ENCODE measurements at regions of chr5 and their contacts with region 1.

Region 1: DNA sequence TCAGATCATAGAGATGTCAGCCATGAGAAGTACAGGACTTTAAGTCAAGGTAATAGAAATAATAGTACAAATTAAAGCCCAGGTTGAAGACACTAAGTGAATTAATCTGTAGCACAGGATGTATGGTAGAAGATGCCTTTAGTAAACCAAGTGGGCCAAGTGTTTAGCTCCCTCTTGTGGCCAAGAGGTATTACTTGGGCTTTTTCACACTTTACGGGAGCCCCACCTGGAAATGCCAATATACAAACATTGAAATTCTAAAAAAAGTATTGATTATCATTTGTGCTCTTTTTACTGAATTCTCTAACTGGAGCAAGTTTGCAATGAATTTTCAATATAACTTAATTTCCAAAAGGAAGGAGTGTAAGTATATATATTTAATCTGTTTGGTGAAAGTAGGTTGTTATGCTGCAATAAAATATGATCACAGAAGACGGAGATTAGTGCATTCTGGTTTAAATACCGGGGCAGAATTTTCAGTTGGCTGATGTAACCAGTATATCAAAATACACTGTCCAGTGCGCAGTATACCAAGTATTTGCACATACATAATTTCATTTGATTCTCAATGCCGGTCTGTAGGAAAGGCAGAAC is 84.7 kb downstream of the PARP8 start:
- DNase-seq: peak; percentile 37 to 42
- H3K4me3 ChIP-seq: no peak overlapping the region
- H3K4me3 Mint-ChIP-seq: no peak overlapping the region
- H3K27ac Mint-ChIP-seq: no peak overlapping the region
- H3K4me1 ChIP-seq: no peaks in the 10 kb centered on the region
- H3K4me1 Mint-ChIP-seq: no peaks in the 10 kb centered on the region
- H3K27me3 ChIP-seq: no peaks in the 10 kb centered on the region
- H3K27me3 Mint-ChIP-seq: no peaks in the 10 kb centered on the region
- CTCF ChIP-seq: peak; percentile 67 to 84

Region 2: GRCh38 chr5:50553560-50553984 is 197.6 kb before region 1 on chr5:
- CTCF ChIA-PET with region 1: no interaction called
- POLR2A ChIA-PET with region 1: no interaction called
- intact Hi-C with region 1: loop called (anchors 10 kb)
- DNase-seq: peak in 1 of 2 experiments; percentile 25
- H3K4me3 ChIP-seq: no peak overlapping the region
- H3K4me3 Mint-ChIP-seq: no peak overlapping the region
- H3K27ac Mint-ChIP-seq: no peak overlapping the region
- H3K4me1 ChIP-seq: no peaks in the 10 kb centered on the region
- H3K4me1 Mint-ChIP-seq: no peaks in the 10 kb centered on the region
- H3K27me3 ChIP-seq: no peaks in the 10 kb centered on the region
- H3K27me3 Mint-ChIP-seq: peaks cover 2% of the 10 kb centered on the region
- CTCF ChIP-seq: no peak

Measured in Caco-2 (cell line).